ENCODE measurements at regions of chr14 and their contacts with region 1.

Region 1: GRCh38 chr14:80164991-80165721 is 46.1 kb downstream of the DIO2 start:
- DNase-seq: peak; percentile 84
- ATAC-seq: peak; percentile 65
- H3K4me3 ChIP-seq: no peak overlapping the region
- H3K27ac ChIP-seq: no peak overlapping the region
- H3K4me1 ChIP-seq: no peaks in the 10 kb centered on the region; the same call in 1 of the 2 replicates
- H3K27me3 ChIP-seq: no peaks in the 10 kb centered on the region
- CTCF ChIP-seq: no peak
- POLR2A ChIP-seq: no peak
- RAD21 ChIP-seq: no peak

Region 2: GRCh38 chr14:80192993-80193392 is 27.8 kb after region 1 on chr14:
- CTCF ChIA-PET with region 1: no interaction called
- POLR2A ChIA-PET with region 1: no interaction called
- dilution Hi-C with region 1: no loop called
- in situ Hi-C with region 1: no loop called
- intact Hi-C with region 1: loop called (anchors 2 kb)
- DNase-seq: no peak
- ATAC-seq: no peak
- H3K4me3 ChIP-seq: no peak overlapping the region
- H3K27ac ChIP-seq: no peak overlapping the region
- H3K4me1 ChIP-seq: no peaks in the 10 kb centered on the region
- H3K27me3 ChIP-seq: no peaks in the 10 kb centered on the region
- CTCF ChIP-seq: no peak
- POLR2A ChIP-seq: no peak
- RAD21 ChIP-seq: no peak